Dendritic cell treated with granulocyte-macrophage colony-stimulating factor and Interleukin-4, amounts not matched to agents 40 ng/mL and 50 ng/mL, for 4 days (primary cell): ENCODE measurements at regions of chr10 and their contacts with region 1.

Region 1: DNA sequence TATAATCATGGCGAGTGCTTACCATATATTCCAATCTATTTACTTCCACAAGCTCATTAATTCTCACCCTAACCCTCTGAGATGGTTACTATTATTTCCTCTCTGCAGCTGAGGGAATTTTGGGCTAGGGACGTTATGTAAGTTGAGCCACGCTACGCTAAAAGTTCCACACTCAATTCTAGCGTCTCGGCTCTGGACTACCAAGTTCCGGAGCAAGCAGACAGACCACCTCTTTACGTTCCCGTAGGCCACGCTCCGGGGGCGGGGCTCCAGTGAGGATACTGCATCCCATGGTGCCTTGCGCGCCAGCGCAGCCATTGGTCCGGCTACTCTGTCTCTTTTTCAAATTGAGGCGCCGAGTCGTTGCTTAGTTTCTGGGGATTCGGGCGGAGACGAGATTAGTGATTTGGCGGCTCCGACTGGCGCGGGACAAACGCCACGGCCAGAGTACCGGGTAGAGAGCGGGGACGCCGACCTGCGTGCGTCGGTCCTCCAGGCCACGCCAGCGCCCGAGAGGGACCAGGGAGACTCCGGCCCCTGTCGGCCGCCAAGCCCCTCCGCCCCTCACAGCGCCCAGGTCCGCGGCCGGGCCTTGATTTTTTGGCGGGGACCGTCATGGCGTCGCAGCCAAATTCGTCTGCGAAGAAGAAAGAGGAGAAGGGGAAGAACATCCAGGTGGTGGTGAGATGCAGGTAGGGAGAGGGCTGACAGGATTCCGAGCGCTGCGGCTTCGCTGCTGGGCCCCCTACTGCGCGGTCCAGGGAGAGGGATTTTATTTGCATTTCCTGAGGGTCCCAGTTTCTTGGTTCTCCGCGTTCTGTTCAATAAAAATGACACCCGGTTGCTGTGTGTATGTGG is at the start of gene KIF11:
- H3K4me3 Mint-ChIP-seq: peak within 1 kb of the TSS; percentile 96
- H3K27ac Mint-ChIP-seq: peak within 1 kb of the TSS; percentile 98
- H3K4me1 Mint-ChIP-seq: peaks cover 35% of the 10 kb centered on the region
- H3K27me3 Mint-ChIP-seq: no peaks in the 10 kb centered on the region

Region 2: GRCh38 chr10:92290837-92291615 is 302.0 kb before region 1 on chr10 and contains the starts of genes CPEB3 and MARCHF5:
- intact Hi-C with region 1: loop called (anchors 5 kb)
- H3K4me3 Mint-ChIP-seq: peak within 1 kb of the TSS; percentile 88
- H3K27ac Mint-ChIP-seq: peak within 1 kb of the TSS; percentile 92
- H3K4me1 Mint-ChIP-seq: peaks cover 21% of the 10 kb centered on the region
- H3K27me3 Mint-ChIP-seq: no peaks in the 10 kb centered on the region

Region 3: GRCh38 chr10:92573798-92574547 is 19.0 kb before region 1 on chr10 and contains the start of gene IDE:
- intact Hi-C with region 1: loop called (anchors 1 kb)
- H3K4me3 Mint-ChIP-seq: peak within 1 kb of the TSS; percentile 88
- H3K27ac Mint-ChIP-seq: peak within 1 kb of the TSS; percentile 94
- H3K4me1 Mint-ChIP-seq: peaks cover 48% of the 10 kb centered on the region
- H3K27me3 Mint-ChIP-seq: no peaks in the 10 kb centered on the region

Region 4: DNA sequence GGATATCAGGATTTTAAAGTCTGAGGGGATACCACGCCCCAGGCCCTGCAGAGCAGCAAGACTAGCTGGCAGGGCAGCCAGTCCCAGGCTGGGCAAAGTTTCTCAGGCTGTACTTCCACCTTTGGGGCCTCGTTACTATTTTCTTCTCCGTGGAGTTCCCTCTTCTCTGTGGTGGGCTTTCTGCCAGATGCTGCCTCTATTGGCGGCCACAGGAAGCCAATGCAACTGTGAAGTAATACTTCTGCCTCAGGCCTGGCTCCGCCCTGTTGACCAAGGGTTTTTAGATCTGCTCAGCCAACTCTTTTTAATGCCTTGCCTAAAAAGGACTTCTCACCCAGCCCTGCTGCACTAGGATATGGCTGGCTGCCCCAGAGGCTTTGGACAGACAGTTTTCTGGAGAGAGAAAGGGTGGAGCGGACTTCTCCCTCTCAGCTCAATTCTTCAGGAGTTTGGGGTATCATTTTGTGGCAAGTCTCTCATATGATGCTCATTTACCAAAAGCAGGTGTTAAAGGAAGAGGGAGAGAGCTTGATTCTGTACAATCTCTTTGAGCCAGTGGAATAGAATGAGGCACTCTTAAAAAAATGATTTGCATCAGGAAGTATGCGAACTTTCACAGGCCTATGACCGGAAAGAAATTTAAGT is 164.2 kb after region 1 on chr10:
- intact Hi-C with region 1: loop called (anchors 10 kb)
- H3K4me3 Mint-ChIP-seq: peak overlapping the region; percentile 31
- H3K27ac Mint-ChIP-seq: peak overlapping the region; percentile 88
- H3K4me1 Mint-ChIP-seq: peaks cover 58% of the 10 kb centered on the region
- H3K27me3 Mint-ChIP-seq: no peaks in the 10 kb centered on the region

Region 5: GRCh38 chr10:92880233-92880861 is 287.4 kb after region 1 on chr10:
- intact Hi-C with region 1: loop called (anchors 5 kb)
- H3K4me3 Mint-ChIP-seq: no peak overlapping the region
- H3K27ac Mint-ChIP-seq: no peak overlapping the region
- H3K4me1 Mint-ChIP-seq: peaks cover 16% of the 10 kb centered on the region
- H3K27me3 Mint-ChIP-seq: no peaks in the 10 kb centered on the region